ENCODE measurements at regions of chr2 and their contacts with region 1.

Region 1: DNA sequence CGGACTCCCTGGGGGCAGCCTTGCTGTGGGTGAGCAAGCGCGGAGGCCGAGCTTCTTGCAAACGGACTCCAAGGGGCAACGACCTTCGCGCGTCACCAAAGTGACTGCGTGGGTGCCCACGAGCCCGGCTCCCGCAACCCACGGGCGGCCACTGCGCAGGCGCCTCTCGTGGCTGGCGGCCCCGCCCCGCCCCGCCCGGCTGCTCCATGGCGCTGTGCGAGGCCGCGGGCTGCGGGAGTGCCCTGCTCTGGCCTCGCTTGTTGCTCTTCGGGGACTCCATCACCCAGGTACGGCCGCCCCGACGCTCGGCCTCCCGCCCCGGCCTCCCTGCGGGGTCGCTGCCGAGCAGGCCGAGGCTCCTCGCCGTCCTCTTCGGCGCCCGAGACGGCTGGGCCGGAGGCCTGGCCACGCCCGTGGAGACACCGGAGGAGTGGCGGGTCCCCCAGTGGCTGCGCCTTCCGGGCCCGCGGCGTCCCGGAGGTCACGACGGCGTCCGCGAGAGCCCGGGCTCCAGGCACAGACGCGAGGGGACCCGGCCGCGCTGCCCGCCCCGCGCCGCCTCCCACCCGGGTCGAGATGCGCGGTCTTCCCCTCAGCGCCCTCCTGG is at the start of gene IAH1:
- DNase-seq: peak; percentile 81
- ATAC-seq: peak; percentile 81
- H3K4me3 Mint-ChIP-seq: peak within 1 kb of the TSS; percentile 79
- H3K27ac Mint-ChIP-seq: peak within 1 kb of the TSS; percentile 75
- H3K4me1 Mint-ChIP-seq: peaks cover 42% of the 10 kb centered on the region
- H3K27me3 Mint-ChIP-seq: no peaks in the 10 kb centered on the region
- total RNA-seq, gene IAH1: 53.7 to 63.7 TPM

Region 2: GRCh38 chr2:9003616-9004337 is 470.7 kb before region 1 on chr2 and contains the start of gene MBOAT2:
- CTCF ChIA-PET with region 1: no interaction called
- POLR2A ChIA-PET with region 1: no interaction called
- intact Hi-C with region 1: loop called in 1 of 2 experiments (anchors 1 kb)
- DNase-seq: peak; percentile 89
- ATAC-seq: peak; percentile 96
- H3K4me3 Mint-ChIP-seq: peak within 1 kb of the TSS; percentile 75
- H3K27ac Mint-ChIP-seq: peak within 1 kb of the TSS; percentile 64
- H3K4me1 Mint-ChIP-seq: peaks cover 11% of the 10 kb centered on the region
- H3K27me3 Mint-ChIP-seq: peaks cover 6% of the 10 kb centered on the region
- total RNA-seq, gene MBOAT2: 4.7 to 6.9 TPM

Region 3: GRCh38 chr2:9230881-9231670 is 243.4 kb before region 1 on chr2:
- CTCF ChIA-PET with region 1: no interaction called
- POLR2A ChIA-PET with region 1: no interaction called
- intact Hi-C with region 1: no loop called
- DNase-seq: no peak
- ATAC-seq: no peak
- H3K4me3 Mint-ChIP-seq: no peak overlapping the region
- H3K27ac Mint-ChIP-seq: no peak overlapping the region
- H3K4me1 Mint-ChIP-seq: no peaks in the 10 kb centered on the region
- H3K27me3 Mint-ChIP-seq: peaks cover 18% of the 10 kb centered on the region

Region 4: GRCh38 chr2:9951272-9951972 is 477.0 kb after region 1 on chr2 and contains the start of gene GRHL1:
- CTCF ChIA-PET with region 1: no interaction called
- POLR2A ChIA-PET with region 1: no interaction called
- intact Hi-C with region 1: loop called in 1 of 2 experiments (anchors 1 kb)
- DNase-seq: peak; percentile 95
- ATAC-seq: peak; percentile 98
- H3K4me3 Mint-ChIP-seq: peak within 1 kb of the TSS; percentile 68
- H3K27ac Mint-ChIP-seq: no peak within 1 kb of the TSS
- H3K4me1 Mint-ChIP-seq: peaks cover 4% of the 10 kb centered on the region
- H3K27me3 Mint-ChIP-seq: peaks cover 39% of the 10 kb centered on the region
- total RNA-seq, gene GRHL1: 0.27 to 0.53 TPM